Activated CD8-positive, alpha-beta T cell treated with anti-CD3 and anti-CD28 coated beads, Interleukin-2, amount 10 ng/mL, durations not matched to agents 7 days and 5 days (primary cell): ENCODE measurements at regions of chr12 and their contacts with region 1.

Region 1: DNA sequence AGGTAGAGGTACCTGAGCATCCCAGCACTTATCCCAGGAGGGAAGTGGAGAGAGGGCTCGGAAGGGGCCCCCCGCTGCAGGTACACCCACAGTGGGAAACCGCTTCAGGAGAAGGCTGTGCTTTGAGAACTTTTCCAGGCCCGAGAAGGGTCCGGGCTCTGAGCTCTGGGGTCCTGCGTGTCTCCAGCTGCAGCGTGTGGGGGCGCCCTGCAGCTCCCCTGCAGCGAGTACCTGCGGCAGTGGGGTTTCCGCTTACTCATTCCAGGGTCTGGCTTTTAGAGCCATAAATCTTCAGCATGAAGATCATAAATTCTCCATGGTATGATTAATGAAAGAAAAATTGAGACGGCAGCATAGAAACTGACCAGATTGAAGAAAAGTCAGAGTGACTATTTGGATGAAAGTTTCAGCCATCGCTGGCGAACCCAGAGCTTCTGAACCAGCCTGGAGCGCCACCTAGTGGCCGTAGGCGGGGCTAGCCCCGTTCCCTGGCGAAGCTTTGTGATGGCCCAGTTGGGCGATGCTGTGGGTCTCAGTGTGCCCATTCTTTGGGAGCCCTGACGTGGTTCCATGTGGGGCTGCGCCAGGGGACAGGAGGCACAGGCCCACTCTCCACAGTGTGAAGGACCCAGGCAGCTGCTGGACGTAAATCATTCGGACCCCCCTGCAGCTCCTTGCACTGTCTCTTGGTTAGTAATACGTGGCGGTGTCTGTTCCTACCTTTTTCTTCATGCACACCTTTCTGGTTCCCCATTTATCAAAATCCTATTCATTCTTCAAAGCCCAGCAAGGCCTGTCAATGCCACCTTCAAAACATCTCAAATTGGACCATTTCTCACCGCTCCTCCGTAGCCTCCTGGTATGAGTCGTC is 198.2 kb downstream of the TSPAN9 start:
- DNase-seq: peak; percentile 79
- ATAC-seq: peak; percentile 89
- H3K4me3 Mint-ChIP-seq: no peak overlapping the region
- H3K27ac Mint-ChIP-seq: no peak overlapping the region
- H3K4me1 Mint-ChIP-seq: no peaks in the 10 kb centered on the region
- H3K27me3 Mint-ChIP-seq: peaks cover 9% of the 10 kb centered on the region

Region 2: GRCh38 chr12:3073438-3074250 is 201.8 kb before region 1 on chr12:
- CTCF ChIA-PET with region 1: interaction called, 49 read pairs
- POLR2A ChIA-PET with region 1: no interaction called
- DNase-seq: peak; percentile 88
- ATAC-seq: peak; percentile 56
- H3K4me3 Mint-ChIP-seq: no peak overlapping the region
- H3K27ac Mint-ChIP-seq: no peak overlapping the region
- H3K4me1 Mint-ChIP-seq: peaks cover 3% of the 10 kb centered on the region
- H3K27me3 Mint-ChIP-seq: peaks cover 34% of the 10 kb centered on the region

Region 3: DNA sequence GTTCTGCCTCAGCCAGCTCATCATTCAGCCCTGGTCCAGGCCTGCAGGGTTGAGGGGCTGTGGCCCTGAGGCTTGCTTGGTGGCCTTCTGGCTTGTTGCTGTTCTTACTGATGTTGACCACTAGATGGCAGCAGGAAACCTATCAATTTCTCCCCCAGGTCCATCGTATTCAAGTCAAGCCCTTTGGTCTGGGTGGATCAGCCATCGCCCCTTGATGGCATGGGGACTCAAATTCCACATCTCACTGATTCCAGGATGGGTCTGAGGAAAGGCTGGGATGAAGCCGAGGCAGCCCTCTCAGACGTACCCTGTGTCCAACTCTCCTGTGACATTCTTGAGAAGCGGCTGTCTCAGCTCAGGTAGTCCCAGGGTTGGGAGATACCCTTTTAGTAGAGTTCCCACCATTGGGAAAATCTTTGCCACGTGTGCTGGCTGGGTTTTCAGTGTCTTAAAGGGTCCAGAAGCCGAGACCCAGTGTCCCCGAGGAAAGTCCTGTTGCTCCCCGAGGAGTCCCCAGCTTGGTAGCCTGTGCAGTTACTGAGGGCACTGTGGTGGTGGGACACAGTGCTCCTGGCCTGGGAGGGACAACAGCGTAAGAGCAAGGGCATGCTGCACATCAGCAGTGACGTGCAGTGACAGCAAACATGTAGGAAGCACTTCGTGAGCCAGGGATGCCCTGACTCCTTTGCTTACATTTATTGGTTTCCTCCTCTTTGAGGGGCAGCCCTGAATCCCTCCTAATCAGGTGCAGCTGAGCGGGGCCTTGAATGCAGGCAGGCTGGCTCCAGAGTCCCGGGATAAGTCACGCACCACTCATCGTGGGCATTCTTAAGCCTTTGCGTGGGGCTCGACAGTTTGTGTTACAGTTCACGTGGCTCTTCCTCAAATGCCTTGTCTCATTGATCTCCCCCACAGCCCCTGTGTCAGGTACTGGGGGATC is 139.6 kb before region 1 on chr12:
- CTCF ChIA-PET with region 1: interaction called, 36 read pairs
- POLR2A ChIA-PET with region 1: no interaction called
- DNase-seq: peak; percentile 56
- ATAC-seq: peak; percentile 69
- H3K4me3 Mint-ChIP-seq: no peak overlapping the region
- H3K27ac Mint-ChIP-seq: no peak overlapping the region
- H3K4me1 Mint-ChIP-seq: peaks cover 2% of the 10 kb centered on the region
- H3K27me3 Mint-ChIP-seq: peaks cover 22% of the 10 kb centered on the region

Region 4: GRCh38 chr12:3207858-3208257 is 67.5 kb before region 1 on chr12:
- CTCF ChIA-PET with region 1: interaction called, 20 read pairs
- POLR2A ChIA-PET with region 1: no interaction called
- DNase-seq: no peak
- ATAC-seq: peak; percentile 42
- H3K4me3 Mint-ChIP-seq: no peak overlapping the region
- H3K27ac Mint-ChIP-seq: no peak overlapping the region
- H3K4me1 Mint-ChIP-seq: no peaks in the 10 kb centered on the region
- H3K27me3 Mint-ChIP-seq: peaks cover 9% of the 10 kb centered on the region

Region 5: DNA sequence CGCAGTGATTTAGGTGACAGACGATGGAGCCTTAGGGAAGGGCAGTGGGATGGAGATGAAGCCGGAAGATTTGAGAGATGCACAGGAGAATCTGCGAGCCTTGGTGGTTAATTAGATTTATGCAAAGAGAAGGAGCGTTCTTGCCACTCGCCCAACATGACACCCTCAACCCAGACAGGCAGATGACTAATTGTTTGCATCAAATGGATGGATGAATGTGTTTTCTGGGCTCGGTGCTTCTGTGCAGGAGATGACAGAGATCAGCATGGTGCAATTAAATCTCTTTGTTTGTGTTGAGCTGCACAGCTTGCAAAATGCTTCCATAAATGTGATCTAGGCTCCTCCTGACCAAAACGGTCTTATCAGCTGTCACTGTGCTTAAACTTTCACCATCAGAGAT is 13.3 kb after region 1 on chr12:
- CTCF ChIA-PET with region 1: interaction called, 10 read pairs
- POLR2A ChIA-PET with region 1: no interaction called
- DNase-seq: no peak
- ATAC-seq: no peak
- H3K4me3 Mint-ChIP-seq: no peak overlapping the region
- H3K27ac Mint-ChIP-seq: no peak overlapping the region
- H3K4me1 Mint-ChIP-seq: no peaks in the 10 kb centered on the region
- H3K27me3 Mint-ChIP-seq: no peaks in the 10 kb centered on the region